ENCODE measurements at regions of chr11 and their contacts with region 1.

Region 1: DNA sequence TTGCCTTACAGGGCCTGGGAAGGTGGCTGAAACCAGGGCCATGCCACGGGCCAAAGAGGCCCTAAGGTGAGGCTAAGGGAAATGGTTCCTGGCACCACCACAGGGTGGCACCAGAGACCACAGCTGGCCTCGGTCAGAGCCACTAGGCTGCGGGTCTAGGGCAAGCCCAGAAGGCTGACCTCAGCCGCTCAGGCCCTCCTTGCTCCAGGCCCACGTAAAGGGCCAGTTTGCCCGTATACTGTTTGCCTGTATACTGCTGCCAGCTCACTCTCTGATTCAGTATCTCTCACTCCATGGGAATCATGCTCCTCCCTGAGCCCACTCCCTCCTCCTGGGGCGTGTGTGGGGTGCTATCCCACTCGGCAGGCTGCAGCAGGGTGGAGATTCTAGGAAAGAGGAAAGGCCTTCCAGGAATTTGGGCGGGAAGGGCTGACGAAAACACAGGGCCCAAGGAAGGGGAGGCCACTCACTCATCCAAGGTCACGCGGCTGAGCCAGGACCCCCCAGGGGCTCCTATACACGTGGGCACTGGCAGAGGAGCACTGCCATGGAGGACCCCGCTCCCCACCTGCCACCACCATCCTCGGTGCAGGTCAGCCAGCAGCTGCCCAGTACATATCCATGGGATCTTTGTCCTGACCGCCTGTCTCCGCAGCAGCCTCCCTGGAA is 62.4 kb downstream of the NECTIN1 start:
- DNase-seq: peak; percentile 76
- H3K4me3 Mint-ChIP-seq: no peak overlapping the region
- H3K27ac Mint-ChIP-seq: no peak overlapping the region
- H3K4me1 Mint-ChIP-seq: peaks cover 10% of the 10 kb centered on the region
- H3K27me3 Mint-ChIP-seq: no peaks in the 10 kb centered on the region
- CTCF ChIP-seq: peak; percentile 76

Region 2: GRCh38 chr11:119709638-119710346 is 43.2 kb after region 1 on chr11:
- CTCF ChIA-PET with region 1: no interaction called
- intact Hi-C with region 1: no loop called
- DNase-seq: no peak
- H3K4me3 Mint-ChIP-seq: no peak overlapping the region
- H3K27ac Mint-ChIP-seq: no peak overlapping the region
- H3K4me1 Mint-ChIP-seq: peaks cover 17% of the 10 kb centered on the region
- H3K27me3 Mint-ChIP-seq: no peaks in the 10 kb centered on the region
- CTCF ChIP-seq: no peak

Region 3: DNA sequence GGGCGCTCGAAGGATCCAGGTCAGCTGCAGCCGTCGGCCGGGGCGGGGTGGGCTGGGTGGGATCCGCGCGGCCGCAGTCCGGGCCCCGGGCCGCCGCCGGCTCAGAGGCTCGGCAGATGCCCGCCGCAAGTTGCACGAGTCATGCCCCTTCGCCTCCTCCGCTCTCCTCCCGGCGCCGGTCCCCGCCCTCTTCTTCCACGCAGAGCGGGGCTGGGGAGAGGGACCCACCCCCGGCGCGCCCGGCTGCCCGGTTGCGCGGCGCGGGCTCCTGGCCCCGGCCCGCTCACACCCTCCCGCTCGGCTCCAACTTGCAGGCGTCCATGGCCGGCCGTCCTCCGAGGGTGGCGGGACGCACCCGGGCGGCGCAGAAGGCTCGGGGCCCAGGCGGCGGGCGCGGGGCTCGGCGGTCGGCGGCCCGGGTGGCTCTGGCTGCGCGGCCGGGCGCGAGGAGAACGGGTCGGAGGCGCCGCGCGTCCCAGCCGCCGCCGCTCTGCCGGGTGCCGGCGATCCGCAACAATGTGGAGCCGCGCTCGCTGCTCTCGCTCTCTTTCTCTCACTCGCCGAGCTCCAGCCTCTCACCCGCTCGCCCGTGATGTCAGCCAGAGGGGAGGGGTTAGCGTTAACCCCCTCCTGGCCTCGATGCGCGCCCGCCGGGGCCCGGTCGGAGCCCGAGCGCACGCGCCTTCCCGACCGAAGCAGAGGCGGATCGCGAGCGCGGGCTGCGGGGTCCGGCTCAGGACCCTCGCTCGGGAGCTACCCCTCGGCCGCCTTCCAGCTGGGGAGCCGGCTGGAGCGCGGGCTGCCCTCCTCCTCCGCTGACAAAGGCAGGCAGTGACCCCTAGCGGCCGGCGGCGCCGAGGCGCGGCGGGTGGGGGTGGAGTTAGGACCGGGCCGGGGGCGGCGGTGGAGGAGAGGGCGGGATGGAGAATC is 62.3 kb after region 1 on chr11 and contains the start of gene NECTIN1:
- CTCF ChIA-PET with region 1: no interaction called
- intact Hi-C with region 1: loop called (anchors 10 kb)
- DNase-seq: peak; percentile 84
- H3K4me3 Mint-ChIP-seq: peak within 1 kb of the TSS; percentile 78
- H3K27ac Mint-ChIP-seq: peak within 1 kb of the TSS; percentile 66
- H3K4me1 Mint-ChIP-seq: no peaks in the 10 kb centered on the region
- H3K27me3 Mint-ChIP-seq: peaks cover 10% of the 10 kb centered on the region
- CTCF ChIP-seq: peak; percentile 91
- total RNA-seq, gene NECTIN1: 22.1 and 28.5 TPM in 2 replicates

Region 4: GRCh38 chr11:120013325-120014270 is 347.0 kb after region 1 on chr11:
- CTCF ChIA-PET with region 1: no interaction called
- intact Hi-C with region 1: loop called (anchors 1 kb)
- DNase-seq: peak; percentile 62
- H3K4me3 Mint-ChIP-seq: no peak overlapping the region
- H3K27ac Mint-ChIP-seq: no peak overlapping the region
- H3K4me1 Mint-ChIP-seq: no peaks in the 10 kb centered on the region
- H3K27me3 Mint-ChIP-seq: peaks cover 77% of the 10 kb centered on the region
- CTCF ChIP-seq: no peak

Region 5: DNA sequence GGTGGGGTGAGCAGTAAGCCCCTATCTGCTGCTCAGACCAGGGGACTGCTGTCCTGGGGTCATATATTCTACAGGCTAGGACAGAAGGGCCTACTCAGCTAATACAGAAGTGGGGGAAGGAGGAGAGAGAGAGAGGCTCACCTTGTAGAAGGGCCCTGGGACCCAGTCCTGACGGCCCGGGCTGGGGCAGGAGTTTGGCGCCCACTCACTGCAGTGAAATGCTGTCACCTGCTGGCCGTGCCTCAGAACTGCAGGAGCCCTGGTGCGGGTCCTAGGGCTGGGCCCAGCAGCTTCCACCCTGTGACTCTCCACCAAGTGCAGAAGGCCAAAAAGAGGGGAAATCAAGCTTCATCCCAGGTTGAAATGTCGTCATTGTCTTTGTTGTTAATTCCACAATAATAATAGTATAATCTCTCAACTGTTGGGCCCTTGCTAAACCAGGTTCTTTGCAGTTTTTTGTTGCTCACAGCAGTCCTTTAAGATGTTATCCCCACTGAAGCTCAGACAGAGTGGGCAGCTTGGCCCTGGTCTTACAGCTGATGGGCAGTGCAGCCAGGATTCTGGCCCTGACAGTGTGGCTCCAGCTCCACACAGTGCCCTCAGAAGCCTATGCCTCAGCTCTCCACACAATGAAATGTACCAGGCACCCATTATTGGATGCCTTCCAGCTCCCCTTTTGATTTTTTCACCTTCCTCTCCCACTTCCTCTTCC is 441.7 kb after region 1 on chr11:
- CTCF ChIA-PET with region 1: no interaction called
- intact Hi-C with region 1: loop called (anchors 2 kb)
- DNase-seq: peak; percentile 75
- H3K4me3 Mint-ChIP-seq: no peak overlapping the region
- H3K27ac Mint-ChIP-seq: no peak overlapping the region
- H3K4me1 Mint-ChIP-seq: no peaks in the 10 kb centered on the region
- H3K27me3 Mint-ChIP-seq: peaks cover 45% of the 10 kb centered on the region
- CTCF ChIP-seq: peak; percentile 87

Measured in Calu3 (cell line).